ENCODE measurements at regions of chr2 and their contacts with region 1.

Region 1: DNA sequence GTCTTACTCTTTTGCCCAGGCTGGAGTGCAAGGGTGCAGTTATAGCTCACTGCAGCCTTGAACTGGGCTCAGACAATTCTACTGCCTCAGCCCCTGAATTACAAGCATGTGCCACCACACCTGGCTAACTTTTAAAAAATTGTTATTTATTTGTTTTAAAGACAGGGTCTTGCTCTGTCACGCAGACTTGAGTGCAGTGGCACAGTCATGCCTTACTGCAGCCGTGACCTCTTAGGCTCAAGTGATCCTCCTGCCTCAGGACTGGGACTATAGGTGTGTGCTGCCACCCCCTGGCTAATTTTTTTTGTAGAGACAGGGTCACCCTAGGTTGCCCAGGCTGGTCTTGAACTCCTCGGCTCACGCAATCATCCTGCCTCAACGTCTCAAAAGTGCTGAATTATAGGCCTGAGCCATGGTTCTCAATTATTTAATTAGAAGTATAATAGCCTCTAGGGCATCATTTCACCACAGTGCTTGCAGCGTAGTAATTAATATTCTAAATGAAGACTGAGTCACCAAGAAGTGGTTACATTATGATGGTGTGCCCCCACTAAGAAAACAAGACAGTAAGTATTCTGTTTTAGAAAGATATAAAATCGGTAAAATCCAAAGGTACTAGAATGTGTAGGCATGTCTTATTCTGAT is 69.6 kb downstream of the EML4 start:
- DNase-seq: no peak
- CTCF ChIP-seq: peak; percentile 58

Region 2: DNA sequence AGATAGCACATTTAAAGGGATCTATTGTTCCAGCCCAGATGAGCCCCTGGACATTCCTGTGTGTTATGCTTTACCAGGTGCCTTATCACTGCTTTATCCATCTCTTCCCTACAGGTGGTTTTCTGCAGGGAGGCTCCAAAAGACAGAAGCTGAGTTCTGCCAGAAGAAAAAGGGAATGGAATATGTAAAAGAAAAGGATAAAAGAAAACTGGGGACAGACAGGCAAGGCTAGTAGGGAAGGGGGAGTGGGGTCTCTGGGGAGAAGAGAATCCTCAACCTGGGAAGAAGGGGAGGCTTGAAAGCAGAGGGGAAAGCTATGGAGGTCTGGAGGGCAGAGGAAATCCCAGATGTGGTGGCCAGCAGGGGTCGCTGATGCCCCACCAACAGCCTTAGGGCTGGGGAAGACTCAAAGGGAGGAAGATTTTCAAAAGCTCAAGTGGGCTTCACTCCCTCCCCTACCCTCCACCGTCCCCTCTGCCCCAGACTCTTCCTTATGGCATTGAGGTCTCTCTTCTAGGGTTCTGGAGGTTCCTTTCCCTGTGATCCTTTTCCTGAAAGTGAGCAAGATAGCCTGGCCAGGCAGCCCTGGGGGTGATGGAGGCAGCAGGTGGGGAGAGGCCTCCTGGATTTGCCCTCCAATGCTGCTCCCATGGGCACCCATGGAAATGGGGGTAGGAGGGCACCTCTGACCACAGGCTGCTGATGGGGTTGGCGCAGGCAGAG is 369.1 kb before region 1 on chr2:
- in situ Hi-C with region 1: loop called (anchors 25 kb)
- DNase-seq: peak; percentile 68
- CTCF ChIP-seq: peak; percentile 95

Region 3: GRCh38 chr2:41907771-41908207 is 331.0 kb before region 1 on chr2:
- in situ Hi-C with region 1: no loop called
- DNase-seq: no peak
- CTCF ChIP-seq: no peak

Region 4: DNA sequence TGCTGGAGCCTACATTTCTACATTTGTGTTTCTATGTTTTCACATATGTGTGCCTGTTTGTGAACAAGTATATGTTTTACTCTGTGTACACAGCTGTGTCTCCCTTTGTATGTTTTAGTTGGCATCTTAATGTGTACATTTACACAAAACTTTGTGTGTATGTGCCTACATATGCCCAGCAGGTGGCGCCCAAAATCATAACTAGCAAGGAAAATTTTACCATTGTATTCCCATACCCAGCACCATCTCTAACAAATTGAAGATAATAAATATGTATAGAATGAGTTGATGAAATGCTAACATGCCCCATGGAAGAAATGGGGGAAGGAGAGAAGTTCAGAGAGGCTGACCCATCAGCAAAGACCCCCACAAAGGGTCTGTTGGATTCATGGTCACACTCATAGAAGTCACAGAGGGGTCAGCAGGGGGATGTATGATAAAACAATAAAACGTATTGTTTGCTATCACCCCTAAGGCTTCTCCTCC is 142.8 kb before region 1 on chr2:
- in situ Hi-C with region 1: loop called (anchors 10 kb)
- DNase-seq: no peak
- CTCF ChIP-seq: peak; percentile 74